AG04450 (cell line): ENCODE measurements at regions of chrX and their contacts with region 1.

Region 1: DNA sequence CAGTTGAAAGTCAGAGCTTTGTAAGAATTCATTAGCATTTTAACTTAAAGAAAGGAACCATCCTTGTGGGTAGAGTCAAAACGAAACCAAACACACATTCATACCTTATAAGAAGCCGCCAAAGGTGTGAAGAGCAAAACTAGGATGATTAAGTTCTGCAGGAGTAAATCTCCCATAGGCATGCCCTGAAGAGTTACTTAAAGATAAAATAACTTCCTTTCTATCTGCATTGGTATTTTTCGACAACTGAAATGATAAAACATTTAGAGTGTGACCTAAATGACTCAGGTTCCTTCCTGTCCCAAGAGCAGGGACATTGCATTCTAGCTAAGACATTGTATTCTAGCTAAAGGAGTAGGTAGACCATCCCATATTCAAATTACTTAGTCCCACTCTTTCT is 75.3 kb downstream of the BCOR start:
- DNase-seq: no peak
- H3K4me3 ChIP-seq: no peak overlapping the region
- H3K27ac ChIP-seq: no peak overlapping the region
- H3K27me3 ChIP-seq: no peaks in the 10 kb centered on the region
- CTCF ChIP-seq: no peak

Region 2: DNA sequence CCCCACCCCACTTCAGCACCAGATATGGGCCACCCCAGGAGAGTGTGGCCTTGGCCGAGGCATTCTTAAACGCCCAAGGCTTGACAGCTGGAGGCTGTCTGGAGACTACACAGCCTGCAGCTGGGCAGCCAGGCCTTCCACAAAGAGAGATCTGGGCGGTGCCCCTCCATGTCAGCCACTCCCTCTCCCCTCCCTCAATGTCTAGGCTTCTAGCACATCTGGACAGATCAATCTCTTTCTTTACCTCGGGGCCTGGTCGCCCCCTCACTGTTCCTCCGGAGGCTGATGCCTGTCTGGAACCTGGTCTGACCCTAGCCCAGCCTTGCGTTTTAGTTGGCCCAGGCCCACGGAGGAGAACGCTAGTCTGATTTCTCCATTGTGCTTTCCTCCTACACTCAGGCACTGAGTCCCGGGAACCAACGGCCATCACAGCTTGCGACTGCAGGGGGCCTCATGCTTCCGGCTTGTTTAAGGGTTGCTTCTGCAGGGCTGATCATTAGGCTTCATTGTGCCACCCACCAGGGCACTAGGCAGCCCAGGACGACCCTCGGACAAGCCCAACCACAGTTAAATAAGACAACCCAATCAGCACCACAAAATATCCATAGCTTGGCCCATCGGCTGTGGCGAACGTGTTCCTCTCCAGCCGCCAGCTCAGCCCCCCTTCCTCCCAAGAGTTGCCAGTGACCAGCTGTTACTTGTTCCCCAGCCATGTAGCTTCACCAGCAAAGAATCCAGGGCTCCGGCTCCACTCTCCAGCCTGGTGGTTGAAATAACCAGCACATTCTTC is 125.3 kb before region 1 on chrX:
- CTCF ChIA-PET with region 1: no interaction called
- POLR2A ChIA-PET with region 1: no interaction called
- DNase-seq: peak; percentile 39
- H3K4me3 ChIP-seq: no peak overlapping the region
- H3K27ac ChIP-seq: peak overlapping the region; percentile 68
- H3K27me3 ChIP-seq: no peaks in the 10 kb centered on the region
- CTCF ChIP-seq: peak; percentile 4

Region 3: GRCh38 chrX:40244980-40245379 is 222.6 kb after region 1 on chrX:
- CTCF ChIA-PET with region 1: no interaction called
- POLR2A ChIA-PET with region 1: interaction called, 11 read pairs
- DNase-seq: no peak
- H3K4me3 ChIP-seq: no peak overlapping the region
- H3K27ac ChIP-seq: no peak overlapping the region
- H3K27me3 ChIP-seq: no peaks in the 10 kb centered on the region
- CTCF ChIP-seq: no peak